ENCODE measurements at regions of chr16 and their contacts with region 1.

Region 1: GRCh38 chr16:30407102-30407803 is at the start of gene ZNF771:
- DNase-seq: peak; percentile 68 to 96 (median 86)
- ATAC-seq: peak; percentile 71
- H3K4me3 ChIP-seq: peak within 1 kb of the TSS; percentile 69
- H3K4me3 Mint-ChIP-seq: peak within 1 kb of the TSS; percentile 97
- H3K27ac ChIP-seq: peak within 1 kb of the TSS; percentile 66 to 67
- H3K27ac Mint-ChIP-seq: peak within 1 kb of the TSS; percentile 79
- H3K4me1 ChIP-seq: peaks cover 31% of the 10 kb centered on the region
- H3K4me1 Mint-ChIP-seq: peaks cover 21% of the 10 kb centered on the region
- H3K27me3 ChIP-seq: no peaks in the 10 kb centered on the region
- H3K27me3 Mint-ChIP-seq: no peaks in the 10 kb centered on the region
- CTCF ChIP-seq: no peak
- total RNA-seq, gene ZNF771: 0.80 to 1.2 TPM

Region 2: GRCh38 chr16:30378236-30379204 is 28.7 kb before region 1 on chr16:
- CTCF ChIA-PET with region 1: interaction called, 20 read pairs
- POLR2A ChIA-PET with region 1: interaction called, 131 read pairs
- intact Hi-C with region 1: loop called (anchors 1 to 2 kb)
- DNase-seq: peak; percentile 98 to 100 (median 100)
- ATAC-seq: peak; percentile 74
- H3K4me3 ChIP-seq: peak overlapping the region; percentile 71
- H3K4me3 Mint-ChIP-seq: peak overlapping the region; percentile 99
- H3K27ac ChIP-seq: peak overlapping the region; percentile 100
- H3K27ac Mint-ChIP-seq: peak overlapping the region; percentile 100
- H3K4me1 ChIP-seq: peaks cover 79% of the 10 kb centered on the region
- H3K4me1 Mint-ChIP-seq: peaks cover 60% of the 10 kb centered on the region
- H3K27me3 ChIP-seq: no peaks in the 10 kb centered on the region
- H3K27me3 Mint-ChIP-seq: no peaks in the 10 kb centered on the region
- CTCF ChIP-seq: no peak